Naive thymus-derived CD4-positive, alpha-beta T cell (primary cell): ENCODE measurements at regions of chr1 and their contacts with region 1.

Region 1: DNA sequence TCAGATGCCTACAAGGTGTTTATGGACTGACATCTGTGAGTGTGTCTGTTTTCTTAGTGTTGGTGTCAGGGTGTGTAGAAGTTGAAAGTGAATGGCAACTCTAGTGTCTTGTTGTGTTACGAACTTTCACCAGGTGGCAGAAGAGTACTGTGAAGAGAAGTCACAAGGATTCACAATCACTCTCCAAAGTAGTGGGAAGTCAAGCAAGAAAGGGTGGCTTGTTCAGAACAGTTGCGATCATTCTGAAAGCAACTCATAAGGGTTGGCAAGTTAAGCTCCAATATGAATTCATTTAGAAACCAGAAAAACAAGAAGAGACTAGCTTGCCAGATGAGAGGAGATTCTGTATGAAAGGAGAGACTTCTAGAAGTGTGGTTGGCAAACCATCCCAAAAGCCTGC is 86.1 kb downstream of the FASLG start:
- DNase-seq: peak in 7 of 9 donors; percentile 44 to 72 (median 65)
- ATAC-seq: peak; percentile 79
- H3K4me3 ChIP-seq: no peak overlapping the region
- H3K4me3 Mint-ChIP-seq: peak overlapping the region in 9 of 10 donors; percentile 2 to 78 (median 63)
- H3K27ac ChIP-seq: no peak overlapping the region
- H3K27ac Mint-ChIP-seq: peak overlapping the region in 6 of 9 donors; percentile 14 to 90 (median 80)
- H3K4me1 ChIP-seq: peaks cover 28 to 38% of the 10 kb centered on the region in 2 donors
- H3K4me1 Mint-ChIP-seq: peaks cover 31 to 58% (median 54%) of the 10 kb centered on the region in 7 donors
- H3K27me3 ChIP-seq: no peaks in the 10 kb centered on the region
- H3K27me3 Mint-ChIP-seq: peaks cover 0 to 52% (median 0%) of the 10 kb centered on the region in 5 donors

Region 2: DNA sequence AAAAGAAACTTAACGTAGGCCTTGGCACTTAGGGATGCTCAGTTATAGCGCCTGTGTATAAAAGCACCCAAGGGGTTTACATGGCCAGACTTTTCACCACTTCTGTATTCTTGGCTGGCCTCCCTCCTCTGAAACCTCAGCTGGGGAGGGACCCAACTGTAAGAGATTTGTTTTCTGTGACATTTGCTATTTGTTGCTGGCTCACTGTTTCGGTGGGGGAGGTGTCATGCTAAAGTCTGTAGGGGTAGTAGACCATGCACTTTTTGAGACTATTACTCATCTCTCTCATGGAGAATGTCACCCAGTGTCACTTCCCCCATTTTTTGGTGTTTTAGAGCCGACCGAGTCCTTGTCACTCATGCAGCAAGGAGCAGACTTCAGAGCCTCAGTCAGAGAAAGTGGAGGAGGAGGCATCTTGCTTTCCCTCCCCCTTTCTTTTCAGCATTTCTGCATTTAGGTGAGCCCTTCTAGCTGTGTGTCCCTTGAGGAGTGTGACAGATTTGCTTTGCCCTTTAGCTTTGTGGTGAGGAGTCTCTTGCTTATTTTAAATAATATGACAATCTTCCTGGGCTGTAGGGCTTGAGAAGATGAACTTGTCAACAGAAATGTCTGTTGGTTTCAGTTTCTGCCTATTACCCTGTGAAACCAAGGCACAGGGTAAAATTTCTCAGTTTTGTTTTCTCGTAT is 74.0 kb after region 1 on chr1:
- CTCF ChIA-PET with region 1: interaction called, 6 read pairs
- POLR2A ChIA-PET with region 1: no interaction called
- intact Hi-C with region 1: loop called (anchors 1 to 2 kb)
- DNase-seq: peak in 6 of 9 donors; percentile 7 to 44 (median 12)
- ATAC-seq: peak; percentile 81
- H3K4me3 ChIP-seq: peak overlapping the region; percentile 40
- H3K4me3 Mint-ChIP-seq: peak overlapping the region; percentile 63 to 79 (median 72)
- H3K27ac ChIP-seq: peak overlapping the region; percentile 53
- H3K27ac Mint-ChIP-seq: peak overlapping the region; percentile 76 to 93 (median 84)
- H3K4me1 ChIP-seq: peaks cover 6 to 17% of the 10 kb centered on the region in 2 donors
- H3K4me1 Mint-ChIP-seq: peaks cover 29 to 56% (median 36%) of the 10 kb centered on the region in 7 donors
- H3K27me3 ChIP-seq: no peaks in the 10 kb centered on the region
- H3K27me3 Mint-ChIP-seq: peaks cover 0 to 14% (median 0%) of the 10 kb centered on the region in 5 donors

Region 3: GRCh38 chr1:172887162-172887561 is 142.1 kb after region 1 on chr1:
- CTCF ChIA-PET with region 1: no interaction called
- POLR2A ChIA-PET with region 1: no interaction called
- intact Hi-C with region 1: no loop called
- DNase-seq: no peak
- ATAC-seq: no peak
- H3K4me3 ChIP-seq: no peak overlapping the region
- H3K4me3 Mint-ChIP-seq: no peak overlapping the region
- H3K27ac ChIP-seq: no peak overlapping the region
- H3K27ac Mint-ChIP-seq: no peak overlapping the region
- H3K4me1 ChIP-seq: peaks cover 0 to 12% of the 10 kb centered on the region in 2 donors
- H3K4me1 Mint-ChIP-seq: peaks cover 0 to 17% (median 10%) of the 10 kb centered on the region in 7 donors
- H3K27me3 ChIP-seq: no peaks in the 10 kb centered on the region
- H3K27me3 Mint-ChIP-seq: peaks cover 0 to 71% (median 0%) of the 10 kb centered on the region in 5 donors

Region 4: GRCh38 chr1:173048621-173049321 is 303.8 kb after region 1 on chr1:
- CTCF ChIA-PET with region 1: no interaction called
- POLR2A ChIA-PET with region 1: no interaction called
- intact Hi-C with region 1: loop called in 1 of 2 experiments (anchors 5 kb)
- DNase-seq: no peak
- ATAC-seq: no peak
- H3K4me3 ChIP-seq: no peak overlapping the region
- H3K4me3 Mint-ChIP-seq: no peak overlapping the region
- H3K27ac ChIP-seq: no peak overlapping the region
- H3K27ac Mint-ChIP-seq: no peak overlapping the region
- H3K4me1 ChIP-seq: no peaks in the 10 kb centered on the region
- H3K4me1 Mint-ChIP-seq: peaks cover 0 to 8% (median 7%) of the 10 kb centered on the region in 7 donors
- H3K27me3 ChIP-seq: no peaks in the 10 kb centered on the region
- H3K27me3 Mint-ChIP-seq: peaks cover 0 to 6% (median 0%) of the 10 kb centered on the region in 5 donors

Region 5: DNA sequence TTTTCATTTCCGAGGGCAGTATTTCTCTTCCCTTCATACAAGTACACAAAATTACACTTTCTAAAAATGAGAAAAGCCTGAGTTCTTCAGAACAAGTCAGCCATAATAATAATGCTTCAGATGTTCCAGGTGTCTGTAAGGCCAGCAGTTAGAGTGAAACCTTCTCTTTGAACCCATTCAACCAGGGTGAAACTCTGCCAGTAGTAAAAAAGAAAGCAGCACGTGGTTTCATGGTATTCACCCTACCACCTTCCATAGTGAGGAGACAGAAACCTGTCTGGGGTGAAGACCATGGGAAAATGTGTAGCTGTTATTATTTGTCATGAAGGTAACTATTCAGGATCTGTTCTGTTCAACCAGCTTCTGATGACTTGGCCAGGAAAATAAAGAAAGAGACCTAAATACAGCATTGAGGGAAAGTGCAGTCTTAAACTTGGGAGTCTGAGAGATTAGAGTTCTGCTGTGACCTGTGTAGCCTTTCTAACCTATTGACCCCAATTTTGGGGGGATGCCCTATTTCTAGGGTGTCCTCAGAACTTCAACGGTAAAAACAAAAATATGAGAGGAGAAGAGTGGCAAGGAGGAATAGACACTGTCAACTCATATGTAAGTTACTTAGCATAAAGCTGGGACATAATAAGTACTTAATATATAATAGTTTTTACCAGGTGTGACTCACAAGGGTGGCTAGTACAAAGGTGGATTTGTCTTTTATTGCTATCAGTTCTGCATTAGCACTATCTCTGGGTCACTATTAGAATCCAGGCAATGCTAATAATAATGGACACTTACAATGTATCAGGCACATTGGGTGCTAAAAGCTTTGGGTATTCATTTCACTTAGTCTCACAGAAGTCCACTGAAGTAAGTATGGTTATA is 532.1 kb after region 1 on chr1:
- CTCF ChIA-PET with region 1: no interaction called
- POLR2A ChIA-PET with region 1: no interaction called
- intact Hi-C with region 1: no loop called
- DNase-seq: no peak
- ATAC-seq: no peak
- H3K4me3 ChIP-seq: no peak overlapping the region
- H3K4me3 Mint-ChIP-seq: no peak overlapping the region
- H3K27ac ChIP-seq: no peak overlapping the region
- H3K27ac Mint-ChIP-seq: no peak overlapping the region
- H3K4me1 ChIP-seq: no peaks in the 10 kb centered on the region
- H3K4me1 Mint-ChIP-seq: no peaks in the 10 kb centered on the region
- H3K27me3 ChIP-seq: no peaks in the 10 kb centered on the region
- H3K27me3 Mint-ChIP-seq: peaks cover 0 to 11% (median 0%) of the 10 kb centered on the region in 5 donors

Region 6: DNA sequence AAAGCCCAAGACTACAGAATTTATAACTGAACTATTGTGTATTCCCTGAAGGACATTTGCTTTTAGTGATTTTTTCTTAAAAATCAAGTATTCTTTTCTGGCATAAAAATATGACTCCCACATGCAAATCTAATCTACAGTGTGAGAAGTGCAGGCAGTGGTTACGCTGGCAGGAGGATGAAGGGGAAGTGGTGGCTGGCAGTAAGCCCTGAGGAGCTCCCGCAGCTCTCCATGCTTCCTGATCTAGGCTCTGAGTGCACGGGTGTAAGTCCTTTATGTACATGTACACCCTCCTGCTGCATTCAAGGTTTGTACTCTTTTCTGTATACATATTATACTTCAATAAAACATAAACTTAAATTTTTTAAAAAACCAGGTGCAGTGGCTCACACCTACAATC is 664.6 kb after region 1 on chr1:
- CTCF ChIA-PET with region 1: interaction called, 5 read pairs
- POLR2A ChIA-PET with region 1: no interaction called
- intact Hi-C with region 1: loop called (anchors 5 kb)
- DNase-seq: peak in 1 of 9 donors; percentile 11
- ATAC-seq: peak; percentile 71
- H3K4me3 ChIP-seq: no peak overlapping the region
- H3K4me3 Mint-ChIP-seq: peak overlapping the region in 4 of 10 donors; percentile 7 to 23 (median 20)
- H3K27ac ChIP-seq: no peak overlapping the region
- H3K27ac Mint-ChIP-seq: peak overlapping the region in 2 of 9 donors; percentile 12 to 24
- H3K4me1 ChIP-seq: peaks cover 7 to 8% of the 10 kb centered on the region in 2 donors
- H3K4me1 Mint-ChIP-seq: peaks cover 7 to 37% (median 32%) of the 10 kb centered on the region in 7 donors
- H3K27me3 ChIP-seq: no peaks in the 10 kb centered on the region
- H3K27me3 Mint-ChIP-seq: peaks cover 0 to 2% (median 0%) of the 10 kb centered on the region in 5 donors

Region 7: GRCh38 chr1:173714759-173715537 is 969.9 kb after region 1 on chr1 and contains the start of gene KLHL20:
- CTCF ChIA-PET with region 1: no interaction called
- POLR2A ChIA-PET with region 1: no interaction called
- intact Hi-C with region 1: loop called in 1 of 2 experiments (anchors 1 kb)
- DNase-seq: peak; percentile 60 to 92 (median 89)
- ATAC-seq: peak; percentile 98
- H3K4me3 ChIP-seq: peak within 1 kb of the TSS; percentile 77
- H3K4me3 Mint-ChIP-seq: peak within 1 kb of the TSS; percentile 90 to 100 (median 96)
- H3K27ac ChIP-seq: peak within 1 kb of the TSS; percentile 78
- H3K27ac Mint-ChIP-seq: peak within 1 kb of the TSS; percentile 89 to 99 (median 94)
- H3K4me1 ChIP-seq: peaks cover 11 to 18% of the 10 kb centered on the region in 2 donors
- H3K4me1 Mint-ChIP-seq: peaks cover 14 to 48% (median 35%) of the 10 kb centered on the region in 7 donors
- H3K27me3 ChIP-seq: no peaks in the 10 kb centered on the region
- H3K27me3 Mint-ChIP-seq: peaks cover 14 to 32% (median 19%) of the 10 kb centered on the region in 5 donors
- total RNA-seq, gene KLHL20: 28.3 to 40.9 (median 32.8) TPM

Region 8: GRCh38 chr1:174074757-174075156 is 1329.7 kb after region 1 on chr1:
- CTCF ChIA-PET with region 1: no interaction called
- POLR2A ChIA-PET with region 1: no interaction called
- intact Hi-C with region 1: loop called in 1 of 2 experiments (anchors 1 kb)
- DNase-seq: peak in 3 of 9 donors; percentile 5 to 11 (median 11)
- ATAC-seq: no peak
- H3K4me3 ChIP-seq: no peak overlapping the region
- H3K4me3 Mint-ChIP-seq: no peak overlapping the region
- H3K27ac ChIP-seq: no peak overlapping the region
- H3K27ac Mint-ChIP-seq: no peak overlapping the region
- H3K4me1 ChIP-seq: no peaks in the 10 kb centered on the region
- H3K4me1 Mint-ChIP-seq: peaks cover 0 to 2% (median 0%) of the 10 kb centered on the region in 7 donors
- H3K27me3 ChIP-seq: peaks cover 0 to 3% of the 10 kb centered on the region in 2 donors
- H3K27me3 Mint-ChIP-seq: peaks cover 0 to 14% (median 0%) of the 10 kb centered on the region in 5 donors